ENCODE measurements at regions of chr14 and their contacts with region 1.

Region 1: GRCh38 chr14:58213176-58213575 is 13.2 kb downstream of the ACTR10 start:
- DNase-seq: no peak
- ATAC-seq: no peak
- H3K4me3 ChIP-seq: no peak overlapping the region
- H3K27ac ChIP-seq: no peak overlapping the region
- H3K4me1 ChIP-seq: no peaks in the 10 kb centered on the region
- H3K27me3 ChIP-seq: no peaks in the 10 kb centered on the region
- CTCF ChIP-seq: no peak
- POLR2A ChIP-seq: no peak

Region 2: DNA sequence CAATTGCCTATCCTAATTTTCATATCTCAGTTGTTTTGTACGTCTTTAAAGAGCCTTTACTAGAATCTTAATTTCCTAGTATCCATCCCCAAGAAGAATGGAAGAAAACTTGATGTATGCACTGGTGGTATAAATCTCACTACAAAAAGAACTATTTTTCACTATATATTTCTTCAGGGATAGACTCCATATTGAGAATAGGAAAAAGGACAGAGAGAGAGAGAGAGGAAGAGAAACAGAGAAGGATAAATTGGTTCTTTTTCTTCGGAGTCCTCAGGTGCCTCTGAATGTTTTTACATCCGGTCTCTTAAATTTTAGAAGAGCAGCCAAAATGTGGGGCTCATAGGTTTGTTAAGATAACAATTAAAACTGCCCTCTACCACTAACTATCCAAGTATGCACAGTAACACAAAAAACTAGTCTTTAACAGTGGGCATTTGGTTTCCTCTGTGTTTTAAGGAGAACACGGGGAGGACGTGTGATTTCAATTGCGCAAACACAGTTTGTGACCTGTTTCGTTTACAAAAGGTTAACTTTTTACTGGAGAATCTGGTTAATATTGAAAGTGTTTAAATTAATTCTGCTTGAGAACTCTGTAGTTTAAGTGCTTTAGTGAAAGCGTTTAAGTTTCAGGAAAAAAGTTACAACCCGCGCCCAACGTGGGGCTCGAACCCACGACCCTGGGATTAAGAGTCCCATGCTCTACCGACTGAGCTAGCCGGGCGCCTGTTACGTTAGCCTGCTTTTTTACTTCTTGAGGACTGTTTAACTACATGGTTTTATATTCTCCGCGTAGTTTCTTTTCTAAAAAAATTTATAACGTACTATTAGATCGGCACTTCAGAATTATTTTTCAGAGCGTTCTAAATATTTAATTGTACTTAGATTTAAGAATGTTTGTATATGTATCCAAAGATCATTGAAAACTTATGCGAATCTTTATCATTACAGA is 26.3 kb after region 1 on chr14:
- intact Hi-C with region 1: loop called in 1 of 10 experiments (anchors 2 kb)
- DNase-seq: peak; percentile 63 to 83 (median 70)
- ATAC-seq: peak; percentile 27 to 46 (median 35)
- H3K4me3 ChIP-seq: peak overlapping the region; percentile 48 to 74 (median 65)
- H3K27ac ChIP-seq: peak overlapping the region; percentile 19 to 85 (median 76)
- H3K4me1 ChIP-seq: peaks cover 0 to 24% (median 3%) of the 10 kb centered on the region in 12 donors
- H3K27me3 ChIP-seq: no peaks in the 10 kb centered on the region
- CTCF ChIP-seq: no peak
- POLR2A ChIP-seq: no peak

Region 3: GRCh38 chr14:58479975-58480374 is 266.8 kb after region 1 on chr14:
- intact Hi-C with region 1: no loop called
- DNase-seq: no peak
- ATAC-seq: no peak
- H3K4me3 ChIP-seq: no peak overlapping the region
- H3K27ac ChIP-seq: no peak overlapping the region
- H3K4me1 ChIP-seq: no peaks in the 10 kb centered on the region
- H3K27me3 ChIP-seq: no peaks in the 10 kb centered on the region
- CTCF ChIP-seq: no peak
- POLR2A ChIP-seq: no peak

Region 4: GRCh38 chr14:58533446-58533845 is 320.3 kb after region 1 on chr14:
- intact Hi-C with region 1: no loop called
- DNase-seq: peak in 2 of 5 donors; percentile 28 to 34
- ATAC-seq: peak; percentile 75 to 90 (median 84)
- H3K4me3 ChIP-seq: no peak overlapping the region
- H3K27ac ChIP-seq: peak overlapping the region in 8 of 12 donors; percentile 24 to 63 (median 56)
- H3K4me1 ChIP-seq: peaks cover 0 to 31% (median 10%) of the 10 kb centered on the region in 12 donors
- H3K27me3 ChIP-seq: no peaks in the 10 kb centered on the region
- CTCF ChIP-seq: no peak
- POLR2A ChIP-seq: no peak

Measured in heart left ventricle (tissue), 16 donors.